ENCODE measurements at regions of chr13 and their contacts with region 1.

Region 1: GRCh38 chr13:102591988-102592781 is 4.6 kb upstream of the TPP2 start:
- DNase-seq: peak; percentile 81
- ATAC-seq: peak; percentile 31

Region 2: GRCh38 chr13:102729560-102730270 is 137.5 kb after region 1 on chr13:
- intact Hi-C with region 1: no loop called
- DNase-seq: no peak
- ATAC-seq: no peak

Region 3: GRCh38 chr13:102845630-102846260 is 253.6 kb after region 1 on chr13 and contains the start of gene ERCC5:
- intact Hi-C with region 1: loop called (anchors 5 kb)
- DNase-seq: peak; percentile 95
- ATAC-seq: peak; percentile 95
- total RNA-seq, gene ERCC5: 26.2 TPM

Region 4: DNA sequence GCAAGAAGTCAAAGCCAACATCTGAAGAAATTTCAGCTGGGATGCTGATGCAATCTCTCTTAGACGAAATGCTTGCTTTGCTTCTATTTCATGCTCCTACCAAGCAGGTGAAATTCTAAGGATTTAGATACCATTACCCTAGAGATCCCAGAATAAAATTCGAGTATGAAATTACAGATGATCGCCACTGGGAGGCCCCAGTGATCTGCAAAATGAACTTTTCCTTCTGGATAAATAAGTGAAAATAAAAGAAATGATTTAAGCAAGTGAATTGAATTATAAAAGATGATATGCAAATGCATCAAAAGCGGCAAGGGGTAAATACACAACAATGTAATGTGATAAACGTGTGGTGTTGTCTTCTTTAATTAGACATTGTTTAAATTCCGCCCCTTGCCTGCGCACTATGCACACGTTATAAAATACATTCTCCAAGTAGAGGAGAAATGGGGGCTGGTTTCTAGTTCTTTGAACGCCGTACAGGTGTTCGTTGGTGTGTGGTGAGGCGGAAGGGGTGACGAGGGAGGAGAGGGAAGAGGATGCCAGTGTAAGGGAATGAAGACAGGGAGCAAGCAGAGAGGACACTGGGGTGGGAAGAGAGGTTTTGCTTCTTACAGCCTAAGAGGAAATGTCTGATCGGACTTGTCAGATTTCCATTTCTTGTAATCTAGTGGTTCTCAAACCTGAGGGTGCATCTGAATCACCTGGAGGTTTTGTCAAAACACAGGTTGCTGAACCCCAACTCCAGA is 311.6 kb after region 1 on chr13:
- intact Hi-C with region 1: no loop called
- DNase-seq: no peak
- ATAC-seq: no peak

Measured in left ventricle myocardium superior (tissue), 1 donor.